H1 (cell line): ENCODE measurements at regions of chr3 and their contacts with region 1.

Region 1: GRCh38 chr3:9422712-9423424 is 25.5 kb downstream of the SETD5 start:
- DNase-seq: no peak
- H3K4me3 ChIP-seq: peak overlapping the region in 1 of 4 experiments; percentile 5; a peak in 1 of 8 replicates
- H3K27ac ChIP-seq: peak overlapping the region; percentile 76
- H3K4me1 ChIP-seq: peaks cover 3 to 7% (median 5%) of the 10 kb centered on the region in 4 experiments; a peak in 5 of 7 replicates
- H3K27me3 ChIP-seq: no peaks in the 10 kb centered on the region
- CTCF ChIP-seq: peak in 2 of 3 experiments; percentile 26 to 62; a peak in 2 of 4 replicates
- EP300 ChIP-seq: no peak
- POLR2A ChIP-seq: no peak
- RAD21 ChIP-seq: peak; percentile 69 to 71

Region 2: GRCh38 chr3:9402410-9403228 is 20.2 kb before region 1 on chr3:
- CTCF ChIA-PET with region 1: interaction called, 43 read pairs
- POLR2A ChIA-PET with region 1: interaction called, 300 read pairs
- DNase-seq: peak; percentile 59 to 86
- H3K4me3 ChIP-seq: peak overlapping the region; percentile 23 to 99 (median 26)
- H3K27ac ChIP-seq: peak overlapping the region; percentile 50; the same call in 1 of the 2 replicates
- H3K4me1 ChIP-seq: peaks cover 4 to 31% (median 14%) of the 10 kb centered on the region in 4 experiments; a peak in 5 of 7 replicates
- H3K27me3 ChIP-seq: no peaks in the 10 kb centered on the region
- CTCF ChIP-seq: no peak
- EP300 ChIP-seq: 0 out of 3 replicates have a peak, but pooled peaks of 1 of the 2 experiments have one; percentile 70
- POLR2A ChIP-seq: no peak
- RAD21 ChIP-seq: no peak

Region 3: DNA sequence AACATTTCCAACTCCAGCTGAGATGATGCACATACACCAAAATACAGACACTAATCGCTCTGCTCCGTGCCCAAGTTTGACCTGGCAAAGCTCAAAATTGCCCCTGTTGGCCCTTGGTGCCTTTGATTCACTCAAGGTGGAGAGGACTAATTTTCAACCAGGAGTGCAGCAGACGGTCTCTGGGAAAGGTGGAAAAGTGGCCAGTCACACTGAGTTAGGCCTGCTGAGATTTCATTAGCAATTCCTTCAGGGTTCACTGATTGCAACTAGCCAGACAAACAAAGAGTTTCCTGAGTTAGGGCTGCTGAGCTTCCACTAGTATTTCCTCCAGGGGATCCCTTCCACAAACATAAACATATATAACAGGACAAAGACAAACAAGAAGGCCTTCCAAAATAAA is 159.5 kb after region 1 on chr3:
- CTCF ChIA-PET with region 1: no interaction called
- POLR2A ChIA-PET with region 1: no interaction called
- DNase-seq: no peak
- H3K4me3 ChIP-seq: no peak overlapping the region; a peak in 1 of 8 replicates
- H3K27ac ChIP-seq: no peak overlapping the region
- H3K4me1 ChIP-seq: peaks cover 2 to 14% (median 6%) of the 10 kb centered on the region in 4 experiments; a peak in 4 of 7 replicates
- H3K27me3 ChIP-seq: no peaks in the 10 kb centered on the region
- CTCF ChIP-seq: no peak
- EP300 ChIP-seq: no peak
- POLR2A ChIP-seq: no peak
- RAD21 ChIP-seq: no peak

Region 4: GRCh38 chr3:9731206-9732079 is 308.6 kb after region 1 on chr3 and contains the start of gene BRPF1:
- CTCF ChIA-PET with region 1: no interaction called
- POLR2A ChIA-PET with region 1: no interaction called
- DNase-seq: peak; percentile 96 to 97
- H3K4me3 ChIP-seq: peak within 1 kb of the TSS; percentile 87 to 94 (median 90)
- H3K27ac ChIP-seq: peak within 1 kb of the TSS; percentile 100
- H3K4me1 ChIP-seq: peaks cover 0 to 8% (median 6%) of the 10 kb centered on the region in 4 experiments; a peak in 6 of 7 replicates
- H3K27me3 ChIP-seq: no peaks in the 10 kb centered on the region
- CTCF ChIP-seq: no peak
- EP300 ChIP-seq: peak in 1 of 2 experiments; percentile 94; a peak in 2 of 3 replicates
- POLR2A ChIP-seq: peak in 1 of 2 experiments; percentile 76; a peak in 2 of 3 replicates
- RAD21 ChIP-seq: no peak
- total RNA-seq, gene BRPF1: 21.7 and 27.7 TPM in 2 replicates